Spleen (tissue), 13 donors: ENCODE measurements at regions of chr16 and their contacts with region 1.

Region 1: GRCh38 chr16:80824718-80825364 is 20.4 kb upstream of the CDYL2 start:
- DNase-seq: no peak
- H3K4me3 ChIP-seq: no peak overlapping the region
- H3K27ac ChIP-seq: no peak overlapping the region
- H3K4me1 ChIP-seq: peaks cover 0 to 5% (median 2%) of the 10 kb centered on the region in 6 donors
- H3K27me3 ChIP-seq: no peaks in the 10 kb centered on the region
- CTCF ChIP-seq: peak; percentile 37 to 89 (median 71)
- POLR2A ChIP-seq: no peak

Region 2: GRCh38 chr16:80536238-80536637 is 288.6 kb before region 1 on chr16:
- intact Hi-C with region 1: loop called (anchors 10 kb)
- DNase-seq: no peak
- H3K4me3 ChIP-seq: no peak overlapping the region
- H3K27ac ChIP-seq: no peak overlapping the region
- H3K4me1 ChIP-seq: peaks cover 0 to 15% (median 9%) of the 10 kb centered on the region in 6 donors
- H3K27me3 ChIP-seq: peaks cover 0 to 23% (median 0%) of the 10 kb centered on the region in 7 donors
- CTCF ChIP-seq: no peak
- POLR2A ChIP-seq: no peak